GM12878 (cell line): ENCODE measurements at regions of chr2 and their contacts with region 1.

Region 1: GRCh38 chr2:109510136-109511028 is 103.4 kb downstream of the SEPTIN10 start:
- DNase-seq: peak; percentile 27
- ATAC-seq: peak; percentile 53
- H3K4me3 ChIP-seq: no peak overlapping the region
- H3K27ac ChIP-seq: no peak overlapping the region
- H3K4me1 ChIP-seq: peaks cover 38% of the 10 kb centered on the region
- H3K27me3 ChIP-seq: no peaks in the 10 kb centered on the region
- CTCF ChIP-seq: peak; percentile 94 to 98 (median 96)
- EP300 ChIP-seq: no peak
- POLR2A ChIP-seq: no peak
- RAD21 ChIP-seq: peak; percentile 92

Region 2: DNA sequence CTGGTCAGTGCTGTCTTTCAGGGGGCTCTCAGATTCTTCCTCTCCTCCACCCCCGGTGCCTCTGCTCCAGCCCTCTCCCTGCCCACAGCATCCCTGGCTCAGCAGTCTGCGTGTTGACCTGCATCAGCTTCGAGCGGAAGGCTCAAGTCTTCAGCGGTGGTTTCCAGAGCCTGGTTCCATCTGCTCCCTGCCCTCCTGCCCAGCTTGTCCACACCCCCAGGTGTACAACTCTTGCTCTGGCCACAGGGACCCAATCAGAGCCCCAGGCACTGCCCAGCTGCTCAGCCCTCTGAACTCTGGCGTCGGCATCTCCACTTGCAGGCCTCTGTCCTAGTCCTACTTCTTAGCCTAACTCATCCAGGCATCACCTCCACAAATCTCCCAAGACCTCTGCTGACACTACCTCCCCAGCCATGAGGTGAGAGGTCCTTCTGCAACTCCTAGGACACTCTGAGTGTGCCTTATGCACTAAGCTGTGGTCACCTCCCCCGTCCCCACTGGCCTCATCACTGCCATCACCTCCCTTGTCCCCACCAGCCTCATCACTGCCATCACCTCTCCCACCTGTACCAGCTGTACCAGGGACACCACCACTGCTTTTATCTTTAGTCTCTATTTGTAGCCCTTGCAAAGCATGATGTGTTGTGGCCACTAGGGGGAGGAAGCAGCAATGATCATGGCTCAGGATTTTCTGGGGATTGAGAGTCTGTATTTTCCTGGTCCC is 582.3 kb before region 1 on chr2:
- CTCF ChIA-PET with region 1: interaction called, 10 read pairs
- POLR2A ChIA-PET with region 1: no interaction called
- RAD21 ChIA-PET with region 1: no interaction called
- SMC1A ChIA-PET with region 1: interaction called, 6 read pairs
- in situ Hi-C with region 1: no loop called
- intact Hi-C with region 1: loop called (anchors 2 kb)
- DNase-seq: no peak
- ATAC-seq: peak; percentile 89
- H3K4me3 ChIP-seq: no peak overlapping the region
- H3K27ac ChIP-seq: no peak overlapping the region
- H3K4me1 ChIP-seq: no peaks in the 10 kb centered on the region
- H3K27me3 ChIP-seq: peaks cover 0 to 2% of the 10 kb centered on the region in 2 experiments; a peak in 2 of 4 replicates
- CTCF ChIP-seq: peak; percentile 73 to 87 (median 79)
- EP300 ChIP-seq: no peak
- POLR2A ChIP-seq: no peak
- RAD21 ChIP-seq: peak; percentile 63

Region 3: GRCh38 chr2:109102588-109103233 is 407.7 kb before region 1 on chr2:
- CTCF ChIA-PET with region 1: no interaction called
- POLR2A ChIA-PET with region 1: no interaction called
- RAD21 ChIA-PET with region 1: no interaction called
- SMC1A ChIA-PET with region 1: no interaction called
- in situ Hi-C with region 1: no loop called
- intact Hi-C with region 1: no loop called
- DNase-seq: no peak
- ATAC-seq: no peak
- H3K4me3 ChIP-seq: no peak overlapping the region
- H3K27ac ChIP-seq: no peak overlapping the region
- H3K4me1 ChIP-seq: no peaks in the 10 kb centered on the region
- H3K27me3 ChIP-seq: no peaks in the 10 kb centered on the region; a peak in 1 of 4 replicates
- CTCF ChIP-seq: no peak
- EP300 ChIP-seq: no peak
- POLR2A ChIP-seq: no peak
- RAD21 ChIP-seq: no peak

Region 4: DNA sequence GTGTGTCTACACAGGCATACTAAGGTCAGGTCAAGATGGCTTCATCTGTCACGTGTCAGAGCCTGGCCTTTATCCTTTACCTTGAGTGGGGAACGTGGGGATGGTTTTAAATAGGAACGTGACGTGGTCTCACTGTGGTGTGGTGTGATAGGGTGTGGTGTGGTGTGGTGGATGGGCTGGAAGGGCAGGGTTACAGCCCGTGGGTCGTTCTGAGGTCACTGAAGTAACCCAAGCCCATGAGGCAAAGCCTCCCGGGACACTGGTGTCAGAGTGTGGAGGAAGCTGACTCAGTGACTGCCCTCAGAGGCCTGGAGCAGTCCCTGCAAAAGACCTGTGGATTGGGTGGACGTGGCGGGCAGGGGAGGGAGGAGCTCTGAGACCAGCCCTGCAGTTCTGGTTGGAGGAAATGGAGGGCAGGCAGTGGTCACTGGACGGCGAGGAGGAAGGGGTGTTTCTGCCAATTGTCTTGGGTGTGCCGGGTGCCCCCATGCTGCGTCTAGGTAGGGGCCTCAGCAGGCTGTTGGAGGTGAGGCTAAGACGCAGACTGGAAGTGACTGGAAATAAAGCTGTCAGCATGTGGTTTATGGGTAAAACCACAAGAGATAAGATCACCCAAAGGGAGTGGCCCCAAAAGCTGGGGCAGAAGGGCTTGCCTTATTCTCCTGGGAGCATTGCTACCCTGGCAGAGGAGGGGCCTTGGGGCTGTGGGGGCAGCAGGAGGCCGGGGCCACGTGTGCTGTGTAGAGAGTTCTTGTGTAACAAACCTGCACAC is 296.6 kb before region 1 on chr2:
- CTCF ChIA-PET with region 1: interaction called, 6 read pairs
- POLR2A ChIA-PET with region 1: interaction called, 4 read pairs
- RAD21 ChIA-PET with region 1: interaction called, 13 read pairs
- SMC1A ChIA-PET with region 1: interaction called, 6 read pairs
- in situ Hi-C with region 1: no loop called
- intact Hi-C with region 1: loop called (anchors 1 kb)
- DNase-seq: peak; percentile 82
- ATAC-seq: peak; percentile 77
- H3K4me3 ChIP-seq: no peak overlapping the region
- H3K27ac ChIP-seq: no peak overlapping the region
- H3K4me1 ChIP-seq: peaks cover 39% of the 10 kb centered on the region
- H3K27me3 ChIP-seq: no peaks in the 10 kb centered on the region; a peak in 1 of 4 replicates
- CTCF ChIP-seq: no peak
- EP300 ChIP-seq: peak; percentile 77 to 92; a peak in 2 of 4 replicates
- POLR2A ChIP-seq: no peak
- RAD21 ChIP-seq: no peak

Region 5: DNA sequence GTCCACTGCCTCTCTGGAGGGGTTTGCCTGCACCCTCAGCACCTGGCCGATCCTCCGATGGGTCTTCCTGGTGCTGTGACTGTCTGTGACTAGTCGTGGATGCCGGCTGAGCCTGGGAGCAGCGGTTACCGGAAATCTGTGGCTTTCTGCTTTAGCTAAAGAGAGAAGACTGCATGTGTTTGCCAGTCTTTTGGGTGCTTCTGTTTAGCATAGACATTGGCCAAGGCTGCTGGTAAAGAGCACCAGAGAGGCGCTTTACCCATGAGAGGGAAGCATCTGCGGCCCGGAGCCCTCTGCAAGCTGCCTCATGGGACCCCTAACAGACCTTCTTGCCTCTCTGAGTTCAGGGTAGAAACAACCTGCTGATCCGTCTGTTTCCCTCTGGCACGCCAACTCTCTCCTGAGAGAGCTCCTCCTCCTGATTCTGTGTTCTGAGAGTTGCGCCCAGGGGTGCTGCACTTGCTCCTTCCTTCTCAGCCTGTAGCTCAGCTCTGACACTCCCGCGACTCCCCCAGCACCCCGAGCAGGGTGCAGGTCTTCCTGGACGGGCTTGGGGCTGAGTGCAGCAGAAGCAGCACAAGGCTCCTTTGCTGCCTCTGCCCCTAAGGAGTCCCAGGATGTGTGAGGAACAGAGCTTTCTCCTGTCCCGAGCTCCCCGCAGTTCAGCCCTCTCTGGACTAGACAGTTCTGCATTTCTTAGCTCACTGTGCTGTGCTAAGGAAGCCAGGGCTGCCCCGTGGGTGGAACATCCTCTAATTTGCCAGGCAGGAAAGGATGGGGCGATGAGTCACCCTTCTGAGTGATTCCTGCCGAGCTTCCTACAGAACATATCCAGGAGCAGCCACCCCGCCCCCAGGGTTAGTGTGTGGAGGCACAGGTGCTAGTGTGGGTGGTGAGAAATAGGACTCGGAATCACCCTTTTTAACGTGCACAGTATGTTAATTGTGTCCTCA is 178.2 kb before region 1 on chr2:
- CTCF ChIA-PET with region 1: interaction called, 3 read pairs
- POLR2A ChIA-PET with region 1: no interaction called
- RAD21 ChIA-PET with region 1: interaction called, 12 read pairs
- SMC1A ChIA-PET with region 1: interaction called, 4 read pairs
- in situ Hi-C with region 1: no loop called
- intact Hi-C with region 1: loop called (anchors 5 kb)
- DNase-seq: no peak
- ATAC-seq: peak; percentile 73
- H3K4me3 ChIP-seq: peak overlapping the region; percentile 63
- H3K27ac ChIP-seq: peak overlapping the region; percentile 48; the same call in 1 of the 2 replicates
- H3K4me1 ChIP-seq: peaks cover 35% of the 10 kb centered on the region
- H3K27me3 ChIP-seq: no peaks in the 10 kb centered on the region
- CTCF ChIP-seq: no peak
- EP300 ChIP-seq: no peak
- POLR2A ChIP-seq: no peak
- RAD21 ChIP-seq: no peak

Region 6: DNA sequence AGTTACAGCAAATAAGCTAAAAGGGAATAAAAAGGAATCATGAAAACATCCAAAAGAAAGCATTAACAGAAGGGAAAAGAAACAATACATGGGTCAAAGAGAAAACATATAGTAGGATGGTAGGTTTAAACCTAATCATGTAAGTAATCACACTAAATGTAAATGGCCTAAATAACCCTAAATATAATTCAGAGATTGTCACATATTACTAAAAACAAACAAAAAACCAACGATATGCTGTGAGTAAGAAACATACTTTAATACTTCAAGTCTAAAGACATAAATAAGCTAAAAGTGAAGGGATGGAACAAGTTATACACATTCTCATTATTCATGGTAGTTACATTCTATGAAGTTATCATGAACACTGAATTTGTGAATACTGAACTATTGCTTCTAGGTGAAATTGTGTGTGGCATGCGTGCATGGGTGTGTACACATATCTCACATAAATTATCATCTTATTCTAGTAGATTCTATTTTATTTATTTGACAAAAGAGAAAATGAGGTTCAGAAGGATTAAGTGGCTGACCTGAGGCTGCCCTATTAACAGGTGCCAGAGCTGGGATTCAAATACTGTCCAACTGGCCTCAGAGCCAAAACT is 67.6 kb before region 1 on chr2:
- CTCF ChIA-PET with region 1: no interaction called
- POLR2A ChIA-PET with region 1: no interaction called
- RAD21 ChIA-PET with region 1: no interaction called
- SMC1A ChIA-PET with region 1: no interaction called
- in situ Hi-C with region 1: no loop called
- intact Hi-C with region 1: no loop called
- DNase-seq: no peak
- ATAC-seq: no peak
- H3K4me3 ChIP-seq: no peak overlapping the region
- H3K27ac ChIP-seq: no peak overlapping the region
- H3K4me1 ChIP-seq: no peaks in the 10 kb centered on the region
- H3K27me3 ChIP-seq: no peaks in the 10 kb centered on the region
- CTCF ChIP-seq: no peak
- EP300 ChIP-seq: no peak
- POLR2A ChIP-seq: no peak
- RAD21 ChIP-seq: no peak

Region 7: GRCh38 chr2:109463891-109464290 is 46.5 kb before region 1 on chr2:
- CTCF ChIA-PET with region 1: no interaction called
- POLR2A ChIA-PET with region 1: no interaction called
- RAD21 ChIA-PET with region 1: no interaction called
- SMC1A ChIA-PET with region 1: no interaction called
- in situ Hi-C with region 1: no loop called
- intact Hi-C with region 1: no loop called
- DNase-seq: no peak
- ATAC-seq: no peak
- H3K4me3 ChIP-seq: no peak overlapping the region
- H3K27ac ChIP-seq: no peak overlapping the region
- H3K4me1 ChIP-seq: no peaks in the 10 kb centered on the region
- H3K27me3 ChIP-seq: no peaks in the 10 kb centered on the region
- CTCF ChIP-seq: no peak
- EP300 ChIP-seq: no peak
- POLR2A ChIP-seq: no peak
- RAD21 ChIP-seq: no peak

Region 8: DNA sequence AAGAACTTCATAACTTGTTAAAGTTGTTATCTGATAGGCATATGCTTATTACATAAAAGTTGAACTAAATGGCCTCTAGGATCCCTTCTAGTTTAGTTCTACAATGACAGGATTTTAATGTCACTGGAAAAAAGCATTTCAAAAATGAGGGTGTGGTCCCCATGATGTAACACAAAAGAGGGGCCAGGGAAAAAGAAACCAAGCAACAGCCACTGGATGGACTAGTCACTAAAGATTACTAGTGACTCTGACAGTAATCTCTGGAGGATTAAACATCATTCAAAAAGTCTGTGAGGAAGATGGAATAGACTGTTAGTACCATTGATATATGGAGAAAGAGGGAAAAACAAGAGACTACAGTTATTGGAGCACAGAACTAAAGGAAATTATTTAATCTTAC is 80.8 kb after region 1 on chr2:
- CTCF ChIA-PET with region 1: no interaction called
- POLR2A ChIA-PET with region 1: no interaction called
- RAD21 ChIA-PET with region 1: no interaction called
- SMC1A ChIA-PET with region 1: no interaction called
- in situ Hi-C with region 1: no loop called
- intact Hi-C with region 1: no loop called
- DNase-seq: no peak
- ATAC-seq: no peak
- H3K4me3 ChIP-seq: no peak overlapping the region
- H3K27ac ChIP-seq: no peak overlapping the region; the same call in 1 of the 2 replicates
- H3K4me1 ChIP-seq: peaks cover 14% of the 10 kb centered on the region
- H3K27me3 ChIP-seq: no peaks in the 10 kb centered on the region
- CTCF ChIP-seq: no peak
- EP300 ChIP-seq: no peak
- POLR2A ChIP-seq: no peak
- RAD21 ChIP-seq: no peak

Region 9: DNA sequence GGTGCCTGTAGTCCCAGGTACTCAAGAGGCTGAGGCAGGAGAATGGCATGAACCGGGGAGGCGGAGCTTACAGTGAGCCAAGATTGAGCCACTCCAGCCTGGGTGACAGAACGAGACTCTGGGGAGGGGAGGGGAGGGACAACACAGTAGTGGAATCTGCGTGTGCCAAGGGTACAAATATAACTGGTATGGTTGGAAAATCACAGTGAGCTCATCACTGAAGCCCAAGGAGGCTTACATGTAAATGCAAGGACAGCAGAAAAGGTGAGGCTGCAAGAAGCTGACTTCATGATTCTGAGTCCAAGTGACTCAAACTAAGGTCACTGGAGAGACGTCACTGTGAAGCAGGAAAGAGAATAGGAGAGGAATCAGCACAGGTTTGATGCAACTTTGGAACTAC is 94.2 kb after region 1 on chr2:
- CTCF ChIA-PET with region 1: interaction called, 4 read pairs
- POLR2A ChIA-PET with region 1: no interaction called
- RAD21 ChIA-PET with region 1: interaction called, 17 read pairs
- SMC1A ChIA-PET with region 1: interaction called, 6 read pairs
- in situ Hi-C with region 1: no loop called
- intact Hi-C with region 1: no loop called
- DNase-seq: no peak
- ATAC-seq: no peak
- H3K4me3 ChIP-seq: no peak overlapping the region
- H3K27ac ChIP-seq: peak overlapping the region; percentile 20; the same call in 1 of the 2 replicates
- H3K4me1 ChIP-seq: peaks cover 10% of the 10 kb centered on the region
- H3K27me3 ChIP-seq: no peaks in the 10 kb centered on the region
- CTCF ChIP-seq: no peak
- EP300 ChIP-seq: no peak
- POLR2A ChIP-seq: no peak
- RAD21 ChIP-seq: no peak